Mammary epithelial cell (primary cell): ENCODE measurements at regions of chr16 and their contacts with region 1.

Region 1: DNA sequence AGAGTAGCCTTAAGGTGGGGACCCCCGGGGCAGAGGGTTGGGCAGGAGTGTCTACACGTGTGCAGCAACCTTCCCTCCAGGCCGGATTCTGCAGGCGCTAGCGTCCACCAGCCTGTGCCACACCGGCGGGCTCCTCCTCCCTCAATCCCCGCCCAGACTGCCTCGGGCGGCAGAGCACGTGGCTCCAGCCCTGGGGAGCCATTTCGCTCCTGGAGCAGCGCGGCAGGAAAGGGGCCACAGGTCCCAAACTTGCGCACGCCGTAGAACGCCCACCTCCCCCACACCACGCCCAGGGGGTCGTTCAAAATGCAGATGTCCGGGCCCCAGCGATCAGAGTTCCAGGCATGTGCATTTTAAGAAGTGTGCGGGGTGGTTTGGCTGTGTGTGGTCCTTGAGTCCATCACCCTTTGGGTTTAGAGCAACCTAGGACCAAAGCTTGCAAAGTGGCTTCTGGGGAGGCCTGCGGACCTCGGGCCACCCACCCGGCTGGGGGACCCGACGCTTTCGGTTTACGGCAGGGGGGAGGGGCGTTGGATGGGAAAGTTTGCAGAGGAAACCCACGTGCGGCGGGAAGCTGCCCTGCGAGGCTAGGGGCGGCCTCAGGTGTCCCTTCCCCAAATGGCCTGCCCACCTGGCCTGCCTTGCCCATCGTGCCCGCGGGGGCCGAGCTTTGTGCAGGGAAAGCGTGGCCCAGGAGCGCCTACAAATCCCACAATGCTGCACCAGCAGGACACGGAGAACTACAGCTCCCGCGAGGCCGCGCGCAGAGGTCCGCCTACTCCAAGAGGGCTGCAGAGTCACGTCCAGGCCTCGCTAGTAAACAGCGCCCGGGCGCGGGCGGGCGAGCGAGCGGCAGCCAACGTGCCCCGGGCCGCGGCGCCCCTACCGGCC is 1.4 kb downstream of the TFAP4 start:
- DNase-seq: peak; percentile 86
- H3K4me3 ChIP-seq: peak overlapping the region; percentile 69 to 89 (median 74)
- H3K27ac ChIP-seq: peak overlapping the region; percentile 65
- H3K4me1 ChIP-seq: peaks cover 20% of the 10 kb centered on the region
- H3K27me3 ChIP-seq: no peaks in the 10 kb centered on the region
- CTCF ChIP-seq: no peak

Region 2: DNA sequence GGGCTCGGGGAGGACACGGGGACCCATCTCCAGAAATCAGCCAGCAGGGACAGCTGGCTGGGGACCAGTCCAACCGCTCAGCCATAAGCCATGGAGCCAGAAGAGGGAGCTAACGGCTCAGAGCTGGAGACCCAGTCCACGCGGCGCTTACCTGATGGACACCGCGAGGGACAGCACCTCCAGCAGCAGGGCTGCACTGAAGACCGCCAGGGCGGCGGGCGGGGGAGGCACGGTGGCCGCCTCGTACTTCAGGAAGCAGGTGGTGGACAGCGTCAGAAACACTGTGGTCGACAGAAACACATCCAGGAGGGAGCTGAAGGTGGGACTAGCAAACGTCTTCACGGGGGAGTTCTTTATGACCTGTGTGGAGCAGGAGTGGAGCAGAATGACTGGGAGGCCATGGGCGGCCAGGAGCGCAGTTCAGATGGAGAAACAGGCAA is 288.3 kb before region 1 on chr16:
- CTCF ChIA-PET with region 1: no interaction called
- dilution Hi-C with region 1: no loop called
- in situ Hi-C with region 1: no loop called
- intact Hi-C with region 1: loop called (anchors 5 kb)
- DNase-seq: peak; percentile 58
- H3K4me3 ChIP-seq: no peak overlapping the region
- H3K27ac ChIP-seq: no peak overlapping the region
- H3K4me1 ChIP-seq: peaks cover 7% of the 10 kb centered on the region
- H3K27me3 ChIP-seq: no peaks in the 10 kb centered on the region
- CTCF ChIP-seq: peak; percentile 73 to 93

Region 3: DNA sequence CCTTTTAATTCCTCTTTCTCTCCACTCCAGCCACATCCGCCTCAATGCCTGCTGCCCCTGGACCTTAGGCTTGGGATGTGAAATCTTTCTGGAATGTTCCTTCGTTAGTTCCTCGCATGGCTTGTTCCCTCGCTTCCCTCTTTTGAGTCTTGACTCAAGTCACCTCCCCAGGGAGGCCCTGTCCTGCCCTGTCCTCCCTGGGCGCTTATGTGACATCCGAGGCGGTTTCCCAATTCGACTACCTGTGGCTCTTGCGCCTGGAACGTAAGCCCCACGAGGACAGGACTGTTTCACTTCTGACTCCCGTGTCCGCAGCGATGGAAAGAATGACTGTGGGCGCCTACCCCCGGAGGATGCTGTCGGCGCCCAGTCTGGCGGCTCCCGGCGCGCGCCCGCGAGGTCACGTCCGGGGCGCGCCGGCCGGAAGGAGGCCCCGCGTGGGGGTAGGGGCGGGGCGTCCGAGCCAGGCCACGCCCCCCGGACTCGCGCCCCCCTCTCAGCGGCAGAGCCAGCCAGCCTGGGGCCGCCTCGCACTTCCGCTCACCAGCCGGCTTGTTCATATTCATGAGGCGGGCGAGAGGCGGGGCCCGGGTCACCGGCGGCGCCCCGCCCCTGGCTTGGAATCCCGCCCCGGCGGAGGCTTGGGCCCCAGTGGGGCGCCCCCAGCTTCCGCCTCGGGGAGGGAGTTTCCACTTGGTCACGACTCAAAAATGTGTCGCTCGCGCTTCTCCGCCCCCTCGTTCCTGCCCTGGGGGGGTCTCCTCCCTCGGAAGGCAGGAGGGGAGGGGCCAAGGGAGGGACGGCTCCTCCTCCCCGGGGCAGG is 36.0 kb after region 1 on chr16:
- CTCF ChIA-PET with region 1: no interaction called
- dilution Hi-C with region 1: no loop called
- in situ Hi-C with region 1: no loop called
- intact Hi-C with region 1: loop called (anchors 1 kb)
- DNase-seq: peak; percentile 95
- H3K4me3 ChIP-seq: peak overlapping the region; percentile 39 to 59 (median 54)
- H3K27ac ChIP-seq: peak overlapping the region; percentile 2
- H3K4me1 ChIP-seq: peaks cover 7% of the 10 kb centered on the region
- H3K27me3 ChIP-seq: no peaks in the 10 kb centered on the region
- CTCF ChIP-seq: no peak

Region 4: DNA sequence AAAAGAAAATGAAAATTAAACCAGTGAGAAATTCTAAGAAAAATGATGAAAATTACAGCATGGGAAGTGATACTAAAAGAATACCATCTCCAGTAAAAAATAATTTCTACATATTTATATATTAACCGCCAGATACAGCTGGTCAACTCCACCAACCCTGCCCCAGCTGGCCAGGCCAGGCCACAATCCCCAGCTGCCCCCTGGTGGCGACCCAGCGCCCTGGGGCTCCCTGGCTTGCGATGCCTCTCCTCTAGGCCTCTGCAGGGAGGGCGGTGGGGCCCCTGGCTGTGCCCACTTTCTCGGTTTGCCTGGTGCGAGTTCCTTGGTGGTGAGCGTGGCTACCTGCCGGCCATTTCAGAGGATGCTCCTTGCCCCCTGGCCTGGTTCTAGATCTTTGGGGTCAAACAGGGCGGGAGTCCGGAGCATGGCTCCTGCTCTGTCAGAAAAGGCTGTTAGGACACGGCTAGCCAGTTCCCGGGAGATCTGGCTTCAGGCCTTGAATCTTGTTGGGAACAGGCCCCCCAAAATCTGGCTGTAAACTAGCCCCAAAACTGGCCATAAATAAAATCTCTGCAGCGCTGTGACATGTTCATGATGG is 59.0 kb after region 1 on chr16:
- CTCF ChIA-PET with region 1: no interaction called
- dilution Hi-C with region 1: no loop called
- in situ Hi-C with region 1: no loop called
- intact Hi-C with region 1: loop called (anchors 1 kb)
- DNase-seq: peak; percentile 32
- H3K4me3 ChIP-seq: no peak overlapping the region
- H3K27ac ChIP-seq: no peak overlapping the region
- H3K4me1 ChIP-seq: peaks cover 10% of the 10 kb centered on the region
- H3K27me3 ChIP-seq: no peaks in the 10 kb centered on the region
- CTCF ChIP-seq: peak; percentile 79 to 95

Region 5: DNA sequence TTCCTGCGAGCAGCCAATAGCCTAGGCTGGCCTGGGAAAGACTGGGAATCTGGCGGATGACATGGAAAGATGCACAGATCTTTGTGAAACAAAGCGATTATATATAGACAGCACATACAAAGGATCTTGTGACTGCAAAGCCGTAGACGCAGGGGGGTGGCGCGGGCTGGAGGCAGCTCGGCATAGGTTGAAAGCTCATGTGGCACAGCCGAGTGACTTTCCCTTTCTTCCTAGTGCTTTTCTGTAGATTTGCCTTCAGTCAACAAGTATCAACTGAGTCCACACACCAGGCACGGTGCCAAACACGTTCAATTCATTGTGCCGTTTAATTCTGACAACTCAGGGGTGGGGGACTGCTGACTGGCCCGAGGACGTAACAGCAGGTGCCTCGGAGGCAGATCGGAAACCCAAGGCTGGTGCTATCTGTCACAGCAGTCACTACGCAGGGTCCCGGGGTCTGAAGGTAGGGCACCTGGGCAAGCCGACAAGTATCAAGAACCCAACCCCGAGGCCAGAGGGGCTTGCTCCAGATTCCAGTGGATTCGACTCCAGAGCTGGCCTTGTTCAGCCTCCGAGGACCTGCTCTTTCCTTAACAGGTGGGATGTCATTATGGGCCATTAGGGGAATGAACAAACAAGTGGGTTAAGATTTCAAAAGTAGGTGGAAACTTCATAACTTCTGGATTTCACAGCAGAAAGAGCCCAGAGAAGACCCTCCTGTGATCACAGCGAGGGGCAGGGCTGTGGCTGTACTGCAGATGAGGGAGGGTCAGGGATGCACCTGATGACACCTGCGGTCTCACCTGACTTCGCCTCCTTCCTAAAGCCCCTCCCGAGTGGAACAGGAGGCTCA is 73.8 kb after region 1 on chr16:
- CTCF ChIA-PET with region 1: no interaction called
- dilution Hi-C with region 1: no loop called
- in situ Hi-C with region 1: no loop called
- intact Hi-C with region 1: no loop called
- DNase-seq: no peak
- H3K4me3 ChIP-seq: no peak overlapping the region
- H3K27ac ChIP-seq: no peak overlapping the region
- H3K4me1 ChIP-seq: no peaks in the 10 kb centered on the region
- H3K27me3 ChIP-seq: no peaks in the 10 kb centered on the region
- CTCF ChIP-seq: no peak

Region 6: DNA sequence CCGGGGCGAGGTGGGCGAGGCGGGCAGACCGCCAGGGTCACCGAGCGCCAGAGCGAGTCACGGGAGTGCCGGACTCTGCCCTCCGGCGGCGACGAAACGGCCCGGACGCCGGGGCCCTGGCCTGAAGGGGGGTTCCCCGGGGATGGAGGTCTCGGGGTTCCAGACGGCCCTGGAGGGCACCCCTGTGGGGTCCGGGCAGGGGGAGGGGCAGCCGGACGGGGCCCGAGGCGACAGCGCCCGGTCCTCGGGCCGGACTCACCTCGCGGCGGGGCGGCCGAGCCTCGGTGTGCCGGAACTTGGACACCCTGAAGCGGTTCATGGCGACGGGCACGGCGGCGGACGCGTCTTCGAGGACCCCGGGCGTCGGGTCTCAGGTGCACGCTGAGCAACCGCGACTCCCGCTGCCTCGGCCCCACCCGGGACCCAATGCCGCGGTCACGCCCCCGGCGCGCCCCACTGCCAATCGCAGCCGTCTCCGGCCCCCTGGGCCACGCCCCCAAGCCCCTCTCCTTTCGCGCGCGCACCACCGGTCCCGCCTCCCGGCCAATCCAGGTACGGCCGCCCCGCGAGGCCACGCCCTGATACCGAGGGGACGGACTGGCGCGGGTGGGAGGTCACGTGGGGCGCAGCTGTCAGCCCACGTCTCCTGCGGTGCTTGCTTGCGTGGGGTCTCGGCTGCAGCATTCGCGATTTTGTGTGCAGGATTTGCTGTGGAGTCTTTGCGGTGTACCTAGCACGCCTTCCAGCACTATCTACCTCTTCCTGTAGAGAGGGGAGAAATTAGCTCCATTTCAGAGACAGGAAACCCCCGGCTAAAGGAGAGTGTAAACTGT is 145.0 kb after region 1 on chr16 and contains the start of gene CORO7:
- CTCF ChIA-PET with region 1: no interaction called
- dilution Hi-C with region 1: no loop called
- in situ Hi-C with region 1: loop called in 1 of 2 experiments (anchors 25 kb)
- intact Hi-C with region 1: loop called (anchors 5 kb)
- DNase-seq: peak; percentile 85
- H3K4me3 ChIP-seq: peak within 1 kb of the TSS; percentile 79 to 83 (median 80)
- H3K27ac ChIP-seq: peak within 1 kb of the TSS; percentile 49
- H3K4me1 ChIP-seq: peaks cover 12% of the 10 kb centered on the region
- H3K27me3 ChIP-seq: no peaks in the 10 kb centered on the region
- CTCF ChIP-seq: no peak
- total RNA-seq, gene CORO7: 10.7 to 26.0 TPM

Region 7: GRCh38 chr16:4461250-4462085 is 190.0 kb after region 1 on chr16:
- CTCF ChIA-PET with region 1: no interaction called
- dilution Hi-C with region 1: no loop called
- in situ Hi-C with region 1: no loop called
- intact Hi-C with region 1: no loop called
- DNase-seq: no peak
- H3K4me3 ChIP-seq: no peak overlapping the region
- H3K27ac ChIP-seq: no peak overlapping the region
- H3K4me1 ChIP-seq: peaks cover 21% of the 10 kb centered on the region
- H3K27me3 ChIP-seq: no peaks in the 10 kb centered on the region
- CTCF ChIP-seq: no peak